ENCODE measurements at regions of chr2 and their contacts with region 1.

Region 1: GRCh38 chr2:167310442-167310841 is 422.2 kb downstream of the XIRP2 start:
- DNase-seq: no peak
- H3K4me3 ChIP-seq: no peak overlapping the region
- H3K27ac ChIP-seq: no peak overlapping the region
- H3K4me1 ChIP-seq: no peaks in the 10 kb centered on the region
- H3K27me3 ChIP-seq: no peaks in the 10 kb centered on the region
- CTCF ChIP-seq: no peak
- EP300 ChIP-seq: no peak
- POLR2A ChIP-seq: no peak

Region 2: GRCh38 chr2:167292430-167293171 is 17.8 kb before region 1 on chr2:
- in situ Hi-C with region 1: no loop called
- intact Hi-C with region 1: loop called (anchors 2 kb)
- DNase-seq: peak; percentile 89
- H3K4me3 ChIP-seq: peak within 1 kb of the TSS; percentile 69 to 84 (median 76)
- H3K27ac ChIP-seq: peak within 1 kb of the TSS; percentile 91 to 92 (median 91)
- H3K4me1 ChIP-seq: peaks cover 0 to 20% (median 2%) of the 10 kb centered on the region in 4 donors
- H3K27me3 ChIP-seq: peaks cover 30% of the 10 kb centered on the region
- CTCF ChIP-seq: peak in 4 of 5 experiments; percentile 22 to 44 (median 38)
- EP300 ChIP-seq: no peak
- POLR2A ChIP-seq: peak; percentile 70

Measured in transverse colon (tissue), 4 donors.